Activated B cell treated with CpG ODN at 0.5 μM for 24 hours (primary cell): ENCODE measurements at regions of chr6 and their contacts with region 1.

Region 1: GRCh38 chr6:41470331-41471063 is 75.7 kb upstream of the FOXP4 start:
- DNase-seq: no peak
- ATAC-seq: peak; percentile 45
- H3K4me3 Mint-ChIP-seq: peak overlapping the region; percentile 66
- H3K27ac Mint-ChIP-seq: no peak overlapping the region
- H3K4me1 Mint-ChIP-seq: peaks cover 20% of the 10 kb centered on the region
- H3K27me3 Mint-ChIP-seq: peaks cover 54% of the 10 kb centered on the region
- CTCF ChIP-seq: no peak

Region 2: DNA sequence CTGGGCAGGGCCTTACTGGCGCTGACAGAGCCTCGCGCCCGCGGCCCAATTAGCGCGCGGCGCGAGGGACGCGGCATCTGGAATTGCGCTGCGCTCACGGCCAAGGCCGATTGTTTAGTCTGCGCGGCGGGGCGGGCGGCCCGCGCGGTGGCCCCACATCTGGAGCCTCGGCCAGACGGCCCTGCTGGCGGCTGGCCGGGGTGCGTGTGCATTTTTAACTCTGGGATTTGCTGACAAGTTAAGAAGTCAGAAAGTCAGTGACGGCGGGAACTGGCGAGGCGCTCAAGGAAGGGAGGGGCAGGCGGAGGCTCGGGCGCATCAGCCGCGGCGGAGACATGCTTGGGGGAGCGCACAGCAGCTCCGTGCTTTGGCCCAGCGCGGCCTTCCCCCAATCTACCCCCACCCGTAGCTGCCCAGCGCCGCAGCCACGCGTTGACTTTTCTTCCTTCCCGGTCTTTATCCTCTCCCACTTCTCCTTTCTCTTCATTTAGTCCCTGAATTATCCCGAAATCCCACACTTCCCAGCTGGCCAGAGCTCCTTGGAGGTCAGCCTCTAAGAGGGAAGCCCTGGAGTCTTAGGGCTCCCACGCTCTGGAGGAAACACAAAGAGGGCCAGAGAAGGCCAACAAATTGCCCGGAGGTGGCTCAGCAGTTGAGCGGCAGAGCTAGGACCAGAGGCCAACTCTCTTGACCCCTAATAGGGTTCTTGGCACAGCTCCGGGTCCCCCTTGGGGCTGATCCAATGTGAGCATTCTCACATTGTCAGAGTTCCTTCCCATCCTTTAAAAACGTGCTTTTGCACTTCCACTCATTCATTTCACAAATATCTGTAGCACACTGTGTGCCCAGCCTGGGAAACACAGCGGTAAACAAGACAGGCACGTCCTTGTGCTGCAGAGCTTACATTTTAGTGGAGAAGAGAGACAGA is 34.9 kb after region 1 on chr6:
- CTCF ChIA-PET with region 1: no interaction called
- POLR2A ChIA-PET with region 1: no interaction called
- intact Hi-C with region 1: loop called (anchors 2 kb)
- DNase-seq: peak; percentile 66
- ATAC-seq: peak; percentile 86
- H3K4me3 Mint-ChIP-seq: peak overlapping the region; percentile 81
- H3K27ac Mint-ChIP-seq: peak overlapping the region; percentile 92
- H3K4me1 Mint-ChIP-seq: peaks cover 43% of the 10 kb centered on the region
- H3K27me3 Mint-ChIP-seq: no peaks in the 10 kb centered on the region
- CTCF ChIP-seq: no peak

Region 3: DNA sequence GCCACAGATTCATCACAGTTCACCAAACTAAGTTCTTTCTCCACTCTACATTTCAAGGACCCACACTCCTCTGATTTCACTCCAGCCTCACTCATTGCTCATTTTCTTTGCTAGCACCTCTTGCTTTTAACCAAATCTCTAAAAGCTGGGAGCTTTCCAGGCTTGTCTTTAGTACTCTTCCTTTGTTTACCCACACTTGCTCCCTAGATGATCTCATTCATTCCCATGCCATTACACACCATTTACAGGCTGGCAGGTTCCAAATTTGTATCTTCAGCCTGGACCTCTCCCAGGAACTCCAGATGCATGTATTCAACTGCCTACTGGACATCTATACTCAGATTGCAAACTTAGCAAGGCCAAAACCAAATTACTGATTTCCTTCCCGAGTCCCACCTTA is 729.5 kb after region 1 on chr6:
- CTCF ChIA-PET with region 1: no interaction called
- POLR2A ChIA-PET with region 1: no interaction called
- intact Hi-C with region 1: no loop called
- DNase-seq: no peak
- ATAC-seq: no peak
- H3K4me3 Mint-ChIP-seq: no peak overlapping the region
- H3K27ac Mint-ChIP-seq: no peak overlapping the region
- H3K4me1 Mint-ChIP-seq: peaks cover 2% of the 10 kb centered on the region
- H3K27me3 Mint-ChIP-seq: no peaks in the 10 kb centered on the region
- CTCF ChIP-seq: no peak

Region 4: GRCh38 chr6:43143235-43144124 is 1673.0 kb after region 1 on chr6:
- CTCF ChIA-PET with region 1: no interaction called
- POLR2A ChIA-PET with region 1: no interaction called
- intact Hi-C with region 1: no loop called
- DNase-seq: peak; percentile 70
- ATAC-seq: peak; percentile 99
- H3K4me3 Mint-ChIP-seq: peak overlapping the region; percentile 39
- H3K27ac Mint-ChIP-seq: no peak overlapping the region
- H3K4me1 Mint-ChIP-seq: peaks cover 4% of the 10 kb centered on the region
- H3K27me3 Mint-ChIP-seq: peaks cover 4% of the 10 kb centered on the region
- CTCF ChIP-seq: no peak